Spleen (tissue), 13 donors: ENCODE measurements at regions of chr1 and their contacts with region 1.

Region 1: GRCh38 chr1:47710329-47711071 is 272.7 kb downstream of the FOXD2 start:
- DNase-seq: peak; percentile 91
- H3K4me3 ChIP-seq: peak overlapping the region in 6 of 8 donors; percentile 19 to 66 (median 30)
- H3K27ac ChIP-seq: no peak overlapping the region
- H3K4me1 ChIP-seq: peaks cover 9 to 31% (median 28%) of the 10 kb centered on the region in 6 donors
- H3K27me3 ChIP-seq: peaks cover 7 to 100% (median 67%) of the 10 kb centered on the region in 7 donors
- CTCF ChIP-seq: peak; percentile 71 to 96 (median 94)
- POLR2A ChIP-seq: no peak

Region 2: GRCh38 chr1:47179017-47179987 is 531.2 kb before region 1 on chr1:
- intact Hi-C with region 1: loop called (anchors 5 kb)
- DNase-seq: peak; percentile 90
- H3K4me3 ChIP-seq: peak overlapping the region in 7 of 8 donors; percentile 15 to 65 (median 24)
- H3K27ac ChIP-seq: peak overlapping the region in 1 of 8 donors; percentile 55
- H3K4me1 ChIP-seq: peaks cover 0 to 20% (median 10%) of the 10 kb centered on the region in 6 donors
- H3K27me3 ChIP-seq: peaks cover 0 to 65% (median 4%) of the 10 kb centered on the region in 7 donors
- CTCF ChIP-seq: peak; percentile 62 to 88 (median 83)
- POLR2A ChIP-seq: no peak

Region 3: GRCh38 chr1:47437447-47438164 is 272.9 kb before region 1 on chr1 and contains the start of gene FOXD2:
- intact Hi-C with region 1: loop called (anchors 5 kb)
- DNase-seq: peak; percentile 97
- H3K4me3 ChIP-seq: peak within 1 kb of the TSS; percentile 64 to 88 (median 70)
- H3K27ac ChIP-seq: peak within 1 kb of the TSS; percentile 66 to 90 (median 86)
- H3K4me1 ChIP-seq: peaks cover 21 to 69% (median 53%) of the 10 kb centered on the region in 6 donors
- H3K27me3 ChIP-seq: peaks cover 4 to 100% (median 72%) of the 10 kb centered on the region in 7 donors
- CTCF ChIP-seq: peak; percentile 96 to 99 (median 98)
- POLR2A ChIP-seq: no peak
- total RNA-seq, gene FOXD2: 0.37 to 1.7 (median 0.92) TPM

Region 4: GRCh38 chr1:47782124-47782789 is 71.8 kb after region 1 on chr1:
- intact Hi-C with region 1: no loop called
- DNase-seq: no peak
- H3K4me3 ChIP-seq: no peak overlapping the region
- H3K27ac ChIP-seq: no peak overlapping the region
- H3K4me1 ChIP-seq: peaks cover 0 to 10% (median 0%) of the 10 kb centered on the region in 6 donors
- H3K27me3 ChIP-seq: peaks cover 0 to 8% (median 0%) of the 10 kb centered on the region in 7 donors
- CTCF ChIP-seq: no peak
- POLR2A ChIP-seq: no peak